ENCODE measurements at regions of chr7 and their contacts with region 1.

Region 1: GRCh38 chr7:54773472-54774399 is 14.7 kb upstream of the SEC61G start:
- DNase-seq: peak; percentile 38
- H3K4me3 ChIP-seq: peak overlapping the region; percentile 42
- CTCF ChIP-seq: peak; percentile 88

Region 2: DNA sequence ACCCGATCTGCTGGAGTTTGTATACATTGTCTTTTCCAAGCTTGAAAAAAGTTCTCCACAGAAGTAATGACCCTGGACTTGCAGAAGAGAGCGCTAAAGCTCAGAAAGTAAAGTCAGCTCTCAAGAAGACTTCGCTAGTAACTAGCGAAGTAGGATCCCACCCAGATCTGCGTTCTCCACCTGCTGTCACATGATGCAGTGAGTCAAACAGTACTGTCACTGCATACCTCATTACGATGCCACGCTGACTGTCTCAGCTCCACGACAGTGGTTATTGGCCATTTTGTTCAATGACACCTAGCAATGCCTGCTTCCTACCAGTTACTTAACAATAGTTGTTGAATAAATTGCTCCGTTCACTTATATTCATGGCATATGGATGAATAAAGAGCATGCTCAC is 14.9 kb after region 1 on chr7:
- CTCF ChIA-PET with region 1: interaction called, 58 read pairs
- POLR2A ChIA-PET with region 1: no interaction called
- DNase-seq: peak; percentile 57
- H3K4me3 ChIP-seq: no peak overlapping the region
- CTCF ChIP-seq: peak; percentile 63

Region 3: DNA sequence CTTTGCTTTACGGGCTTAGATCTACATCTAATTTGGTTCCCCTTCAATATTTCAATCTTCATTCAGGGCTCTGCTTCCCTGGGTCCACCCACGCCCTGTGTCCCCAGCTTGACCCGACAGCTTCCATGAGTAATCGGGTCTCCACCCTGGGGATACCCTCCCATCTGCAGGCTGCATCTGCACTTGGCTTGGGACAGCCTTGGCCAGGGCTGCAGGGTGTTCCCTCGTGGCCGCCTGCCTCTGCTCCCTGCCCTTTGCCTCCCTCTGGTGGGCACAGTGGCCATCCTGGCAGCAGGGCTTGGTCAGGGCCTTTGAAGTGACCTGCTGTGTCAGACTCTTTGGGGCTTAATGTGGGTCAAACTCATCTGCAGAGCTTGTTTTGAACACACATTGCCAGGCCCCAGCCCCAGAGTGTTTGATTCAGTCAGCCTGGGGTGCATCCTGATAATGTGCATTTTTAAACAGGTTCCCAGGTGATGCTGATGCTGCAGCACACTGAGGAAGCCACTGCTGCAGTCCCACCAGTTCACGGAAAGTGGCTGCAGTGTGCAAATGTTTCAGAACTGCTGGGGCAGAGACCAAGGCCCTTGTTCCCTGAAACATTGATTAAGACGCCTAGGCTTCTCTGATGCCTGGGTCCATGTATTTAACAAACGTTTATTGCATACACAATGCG is 65.9 kb after region 1 on chr7:
- CTCF ChIA-PET with region 1: interaction called, 23 read pairs
- POLR2A ChIA-PET with region 1: no interaction called
- DNase-seq: no peak
- H3K4me3 ChIP-seq: no peak overlapping the region
- CTCF ChIP-seq: peak; percentile 75

Region 4: GRCh38 chr7:54944179-54944578 is 170.4 kb after region 1 on chr7:
- CTCF ChIA-PET with region 1: no interaction called
- POLR2A ChIA-PET with region 1: no interaction called
- DNase-seq: no peak
- H3K4me3 ChIP-seq: no peak overlapping the region
- CTCF ChIP-seq: no peak

Region 5: DNA sequence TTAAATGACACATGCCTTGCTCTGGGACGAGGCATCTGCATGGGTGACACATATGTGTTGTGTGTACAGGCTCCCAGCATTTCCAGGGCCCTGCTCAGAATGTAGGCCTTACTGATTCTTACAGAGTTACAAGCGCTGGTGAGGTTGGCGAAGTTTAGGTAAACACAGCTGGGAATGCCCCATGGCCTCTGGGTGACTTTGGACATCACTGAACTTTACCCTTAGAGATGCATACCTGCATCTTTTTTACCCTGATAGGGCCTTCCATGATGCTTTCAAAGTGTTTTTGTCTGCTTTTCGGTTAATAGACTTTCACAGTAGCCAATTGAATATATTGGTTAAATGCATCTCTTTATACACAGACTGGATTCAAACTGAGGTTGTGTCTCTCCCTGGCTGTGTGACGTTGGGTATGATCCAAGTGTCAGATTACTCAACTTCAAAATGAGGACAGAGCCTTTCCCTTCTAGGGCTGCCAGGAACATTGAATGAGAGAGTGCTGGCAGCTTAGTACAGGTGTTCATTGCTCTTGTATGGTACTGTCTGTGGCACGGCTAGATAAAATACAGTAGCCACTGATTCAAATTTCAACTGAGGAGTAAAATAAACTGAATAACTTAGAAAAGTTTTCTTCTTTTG is 274.6 kb after region 1 on chr7:
- CTCF ChIA-PET with region 1: interaction called, 35 read pairs
- POLR2A ChIA-PET with region 1: no interaction called
- DNase-seq: no peak
- H3K4me3 ChIP-seq: no peak overlapping the region
- CTCF ChIP-seq: no peak

Region 6: DNA sequence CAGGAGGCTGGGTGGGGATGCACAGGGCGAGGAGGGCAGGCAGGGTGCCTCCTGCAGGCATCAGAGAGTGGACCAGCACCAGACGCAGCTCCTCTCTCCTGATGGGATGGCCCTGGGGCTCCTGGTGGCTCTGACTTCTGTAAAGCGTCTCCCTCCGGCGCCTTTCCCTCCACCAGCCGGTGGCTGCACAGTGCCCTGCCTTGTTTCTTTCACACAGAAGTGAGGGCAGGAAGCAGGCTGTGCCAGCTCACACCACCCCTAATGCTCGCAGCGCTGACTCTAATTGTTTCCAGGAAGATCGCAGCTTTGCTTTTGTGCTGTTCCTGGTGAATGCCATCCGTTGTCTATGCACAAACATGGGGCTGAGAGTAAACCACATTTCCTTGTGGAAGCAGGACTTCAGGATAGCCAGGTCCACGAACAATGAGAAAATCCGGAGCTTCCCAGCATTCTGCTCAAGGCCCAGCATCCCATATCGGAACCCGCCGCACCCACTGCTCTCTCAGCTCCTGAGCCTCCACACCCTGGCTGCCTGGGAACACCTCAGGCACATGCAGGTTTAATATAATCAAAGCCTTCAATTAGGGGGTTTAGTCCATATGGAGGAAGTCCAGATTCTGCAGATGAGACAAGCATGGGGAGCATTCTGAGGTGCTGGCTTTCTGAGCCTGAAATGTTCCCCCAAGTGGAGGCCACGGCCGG is 439.3 kb after region 1 on chr7:
- CTCF ChIA-PET with region 1: interaction called, 19 read pairs
- POLR2A ChIA-PET with region 1: no interaction called
- DNase-seq: no peak
- H3K4me3 ChIP-seq: no peak overlapping the region
- CTCF ChIP-seq: no peak

Region 7: GRCh38 chr7:55250313-55250712 is 476.6 kb after region 1 on chr7:
- CTCF ChIA-PET with region 1: interaction called, 555 read pairs
- POLR2A ChIA-PET with region 1: no interaction called
- DNase-seq: no peak
- H3K4me3 ChIP-seq: no peak overlapping the region
- CTCF ChIP-seq: peak; percentile 25

Region 8: GRCh38 chr7:55280031-55280454 is 506.3 kb after region 1 on chr7:
- CTCF ChIA-PET with region 1: interaction called, 399 read pairs
- POLR2A ChIA-PET with region 1: no interaction called
- DNase-seq: no peak
- H3K4me3 ChIP-seq: no peak overlapping the region
- CTCF ChIP-seq: peak; percentile 61

Measured in AG04449 (cell line).